Activated T-helper 2 cell treated with anti-CD3 and anti-CD28 coated beads, Interferon-gamma antibody, Interleukin-2, Interleukin-4, amounts not matched to agents 10 μg/mL and 5 μg/mL and 100 μg/mL, durations not matched to agents 14 hours and 24 hours and 36 hours (primary cell): ENCODE measurements at regions of chr12 and their contacts with region 1.

Region 1: DNA sequence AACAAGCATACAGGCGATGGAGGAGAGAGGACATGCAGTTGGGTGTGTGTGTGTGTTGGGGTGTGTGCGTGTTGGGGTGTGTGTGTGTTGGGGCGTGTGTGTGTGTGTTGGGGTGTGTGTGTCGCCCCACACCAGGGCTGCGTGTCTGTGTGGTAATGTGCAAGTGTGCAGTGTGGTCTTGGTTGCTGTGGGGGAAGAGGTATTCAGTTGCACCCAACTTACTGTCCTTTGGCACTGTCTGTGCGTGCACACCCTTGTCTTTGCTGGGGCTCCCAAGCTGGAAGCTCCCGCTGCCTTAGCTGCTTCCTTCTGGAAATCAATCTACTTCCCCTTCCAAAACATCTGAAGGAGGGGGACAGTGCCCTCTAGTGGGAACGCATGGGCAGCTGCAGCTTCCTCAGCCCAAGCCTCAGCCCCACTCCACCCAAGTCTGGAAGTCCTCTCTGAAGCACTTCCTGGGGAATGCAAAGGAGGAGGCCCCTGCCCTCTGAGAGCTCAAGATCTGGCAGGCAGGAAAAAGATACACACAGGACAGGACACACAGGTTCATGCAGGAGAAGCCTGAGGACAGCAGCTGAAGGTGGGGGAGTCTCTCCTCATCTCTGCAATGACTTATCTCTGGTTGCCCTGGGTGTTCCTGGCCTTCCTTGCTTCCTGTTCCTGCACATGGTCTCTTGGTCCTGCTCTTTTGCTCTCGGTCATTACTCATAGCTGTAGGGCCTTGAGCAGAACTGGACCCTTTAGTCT is 13.1 kb downstream of the ASIC1 start:
- DNase-seq: peak; percentile 51
- H3K4me3 Mint-ChIP-seq: no peak overlapping the region
- H3K27ac Mint-ChIP-seq: no peak overlapping the region
- H3K4me1 Mint-ChIP-seq: peaks cover 6% of the 10 kb centered on the region
- H3K27me3 Mint-ChIP-seq: no peaks in the 10 kb centered on the region

Region 2: DNA sequence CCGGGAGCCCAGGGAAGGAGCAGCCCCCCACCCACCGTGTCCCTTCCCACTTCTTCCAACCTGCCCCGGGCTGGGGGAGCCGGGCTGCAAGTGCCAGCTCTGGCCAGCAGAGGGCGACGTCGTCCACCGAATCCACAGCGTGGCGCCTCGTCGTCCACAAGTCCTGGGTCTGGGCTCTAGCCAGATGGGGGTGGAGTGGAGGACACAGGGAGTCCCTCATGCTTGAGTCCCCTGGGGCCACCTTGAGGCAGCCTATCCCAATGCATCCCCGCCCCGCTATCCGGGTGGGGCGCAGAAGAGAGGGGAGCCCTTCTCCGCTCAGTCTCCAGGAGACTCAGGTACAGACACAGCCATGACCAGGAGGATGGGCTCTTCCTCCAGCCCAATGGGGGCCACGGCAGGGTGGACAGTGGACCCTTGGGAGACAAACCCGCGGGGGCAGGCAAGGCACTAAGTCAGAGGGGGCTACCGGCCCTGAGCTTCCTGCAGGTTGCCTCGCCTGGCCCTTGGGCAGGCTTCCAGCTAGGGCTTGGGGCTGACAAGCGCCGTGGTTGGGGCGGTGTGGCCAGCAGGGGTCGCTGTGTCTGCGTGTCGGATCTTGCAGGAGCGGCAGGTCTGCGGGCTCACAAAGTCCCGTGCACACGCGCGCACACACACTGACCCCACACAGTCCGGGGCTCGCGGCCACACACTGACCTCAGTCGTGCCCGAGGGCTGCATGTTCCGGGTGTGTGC is 103.3 kb before region 1 on chr12:
- intact Hi-C with region 1: loop called (anchors 1 kb)
- DNase-seq: peak; percentile 86
- H3K4me3 Mint-ChIP-seq: peak overlapping the region; percentile 63
- H3K27ac Mint-ChIP-seq: no peak overlapping the region
- H3K4me1 Mint-ChIP-seq: peaks cover 6% of the 10 kb centered on the region
- H3K27me3 Mint-ChIP-seq: peaks cover 32% of the 10 kb centered on the region

Region 3: GRCh38 chr12:50043854-50044253 is 26.6 kb before region 1 on chr12:
- intact Hi-C with region 1: loop called (anchors 1 kb)
- DNase-seq: no peak
- H3K4me3 Mint-ChIP-seq: no peak overlapping the region
- H3K27ac Mint-ChIP-seq: peak overlapping the region; percentile 79
- H3K4me1 Mint-ChIP-seq: peaks cover 36% of the 10 kb centered on the region
- H3K27me3 Mint-ChIP-seq: peaks cover 2% of the 10 kb centered on the region